G401 (cell line): ENCODE measurements at regions of chr6 and their contacts with region 1.

Region 1: DNA sequence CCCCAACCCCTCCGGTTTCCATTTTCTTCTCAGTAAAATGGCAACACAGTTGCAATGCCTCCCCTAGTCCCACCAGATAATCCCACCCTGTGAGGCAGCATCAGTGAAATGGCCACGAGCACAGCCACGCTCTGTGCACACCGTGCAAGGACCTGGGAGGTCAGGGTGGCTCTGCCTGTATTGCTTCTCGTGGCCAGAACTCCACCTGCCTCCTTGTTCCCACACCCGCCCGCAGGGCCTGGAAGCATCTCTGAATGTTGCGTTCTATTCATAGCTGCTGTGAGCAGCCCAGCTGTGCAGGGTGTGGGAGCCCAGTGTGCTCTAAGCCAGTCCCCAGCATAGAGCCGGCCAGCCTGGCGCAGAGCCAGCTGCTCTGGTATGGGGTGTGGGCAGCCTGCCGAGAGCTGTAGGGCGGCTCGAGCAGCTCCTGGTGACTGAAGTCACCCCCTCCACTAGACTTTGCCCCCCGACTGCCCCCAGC is 161.1 kb downstream of the DLL1 start:
- DNase-seq: no peak

Region 2: GRCh38 chr6:169831450-169832246 is 298.1 kb before region 1 on chr6:
- in situ Hi-C with region 1: loop called (anchors 25 kb)
- DNase-seq: peak; percentile 79